CD14-positive monocyte (primary cell): ENCODE measurements at regions of chr6 and their contacts with region 1.

Region 1: DNA sequence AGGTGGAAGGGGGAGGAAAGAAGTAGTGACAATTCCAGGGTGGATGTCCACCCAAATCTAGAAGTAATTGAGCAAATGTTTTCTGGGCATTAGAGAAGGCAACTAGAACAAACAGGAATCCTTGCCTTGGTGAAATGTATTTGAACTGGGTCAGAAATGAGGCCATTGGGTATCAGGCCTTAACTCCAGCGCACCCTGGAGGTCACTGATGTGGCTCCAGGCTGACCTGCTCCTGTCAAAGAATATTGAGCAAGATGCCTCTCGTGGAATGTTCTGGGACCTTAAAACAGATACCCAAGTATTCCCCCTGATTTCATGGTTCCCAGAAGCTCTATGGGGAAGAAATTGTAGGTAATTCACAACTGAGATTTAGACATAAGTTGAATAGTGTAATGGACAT is 6.9 kb downstream of the HLA-DPB1 start:
- DNase-seq: peak; percentile 63 to 79 (median 64)
- H3K4me3 ChIP-seq: no peak overlapping the region
- H3K4me3 Mint-ChIP-seq: no peak overlapping the region
- H3K27ac ChIP-seq: no peak overlapping the region
- H3K27ac Mint-ChIP-seq: peak overlapping the region; percentile 38 to 75 (median 73)
- H3K4me1 ChIP-seq: peaks cover 41 to 44% of the 10 kb centered on the region in 2 donors
- H3K4me1 Mint-ChIP-seq: peaks cover 50% of the 10 kb centered on the region
- H3K27me3 ChIP-seq: no peaks in the 10 kb centered on the region
- H3K27me3 Mint-ChIP-seq: peaks cover 0 to 4% (median 3%) of the 10 kb centered on the region in 3 donors
- CTCF ChIP-seq: peak; percentile 68

Region 2: GRCh38 chr6:32894080-32895005 is 188.4 kb before region 1 on chr6:
- intact Hi-C with region 1: loop called in 1 of 2 experiments (anchors 10 kb)
- DNase-seq: peak; percentile 84 to 90 (median 88)
- H3K4me3 ChIP-seq: peak overlapping the region; percentile 75 to 96 (median 79)
- H3K4me3 Mint-ChIP-seq: peak overlapping the region; percentile 99 to 100
- H3K27ac ChIP-seq: peak overlapping the region; percentile 73 to 82
- H3K27ac Mint-ChIP-seq: peak overlapping the region; percentile 89 to 98 (median 94)
- H3K4me1 ChIP-seq: peaks cover 22 to 42% of the 10 kb centered on the region in 2 donors
- H3K4me1 Mint-ChIP-seq: peaks cover 47% of the 10 kb centered on the region
- H3K27me3 ChIP-seq: no peaks in the 10 kb centered on the region
- H3K27me3 Mint-ChIP-seq: peaks cover 0 to 1% (median 0%) of the 10 kb centered on the region in 3 donors
- CTCF ChIP-seq: no peak

Region 3: GRCh38 chr6:33014841-33015634 is 67.7 kb before region 1 on chr6:
- intact Hi-C with region 1: loop called (anchors 1 to 2 kb)
- DNase-seq: peak; percentile 79 to 82 (median 82)
- H3K4me3 ChIP-seq: no peak overlapping the region
- H3K4me3 Mint-ChIP-seq: peak overlapping the region in 1 of 2 donors; percentile 61
- H3K27ac ChIP-seq: no peak overlapping the region
- H3K27ac Mint-ChIP-seq: peak overlapping the region in 2 of 7 donors; percentile 33 to 35
- H3K4me1 ChIP-seq: peaks cover 36 to 42% of the 10 kb centered on the region in 2 donors
- H3K4me1 Mint-ChIP-seq: peaks cover 41% of the 10 kb centered on the region
- H3K27me3 ChIP-seq: no peaks in the 10 kb centered on the region
- H3K27me3 Mint-ChIP-seq: no peaks in the 10 kb centered on the region
- CTCF ChIP-seq: peak; percentile 85

Region 4: DNA sequence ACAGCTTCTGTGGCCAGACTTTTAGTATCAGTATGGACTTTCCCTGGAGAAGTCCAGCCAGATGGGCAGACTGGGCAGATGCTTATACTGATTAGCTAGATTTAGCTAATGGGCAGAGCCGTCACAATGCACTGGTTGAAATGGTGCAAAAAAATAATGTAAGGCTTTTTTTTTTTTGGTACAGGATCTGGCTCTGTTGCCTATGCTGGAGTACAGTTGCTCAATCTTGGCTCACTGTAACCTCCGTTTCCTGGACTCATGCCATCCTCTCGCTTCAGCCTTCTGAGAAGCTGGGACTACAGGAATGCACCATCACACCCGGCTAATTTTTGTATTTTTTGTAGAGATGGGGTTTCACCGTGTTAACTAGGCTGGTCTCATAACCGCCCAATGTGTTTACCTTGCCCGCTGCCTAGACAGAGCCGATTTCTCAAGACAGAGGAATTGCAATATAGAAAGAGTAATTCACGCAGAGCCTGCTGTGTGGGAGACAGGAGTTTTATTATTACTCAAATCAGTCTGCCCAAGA is 292.5 kb after region 1 on chr6:
- intact Hi-C with region 1: no loop called
- DNase-seq: peak; percentile 38 to 57 (median 55)
- H3K4me3 ChIP-seq: peak overlapping the region in 2 of 3 experiments; percentile 30 to 60
- H3K4me3 Mint-ChIP-seq: peak overlapping the region; percentile 79 to 89
- H3K27ac ChIP-seq: peak overlapping the region; percentile 84 to 86
- H3K27ac Mint-ChIP-seq: peak overlapping the region; percentile 89 to 98 (median 97)
- H3K4me1 ChIP-seq: peaks cover 43 to 54% of the 10 kb centered on the region in 2 donors
- H3K4me1 Mint-ChIP-seq: peaks cover 42% of the 10 kb centered on the region
- H3K27me3 ChIP-seq: no peaks in the 10 kb centered on the region
- H3K27me3 Mint-ChIP-seq: peaks cover 0 to 2% (median 2%) of the 10 kb centered on the region in 3 donors
- CTCF ChIP-seq: no peak

Region 5: DNA sequence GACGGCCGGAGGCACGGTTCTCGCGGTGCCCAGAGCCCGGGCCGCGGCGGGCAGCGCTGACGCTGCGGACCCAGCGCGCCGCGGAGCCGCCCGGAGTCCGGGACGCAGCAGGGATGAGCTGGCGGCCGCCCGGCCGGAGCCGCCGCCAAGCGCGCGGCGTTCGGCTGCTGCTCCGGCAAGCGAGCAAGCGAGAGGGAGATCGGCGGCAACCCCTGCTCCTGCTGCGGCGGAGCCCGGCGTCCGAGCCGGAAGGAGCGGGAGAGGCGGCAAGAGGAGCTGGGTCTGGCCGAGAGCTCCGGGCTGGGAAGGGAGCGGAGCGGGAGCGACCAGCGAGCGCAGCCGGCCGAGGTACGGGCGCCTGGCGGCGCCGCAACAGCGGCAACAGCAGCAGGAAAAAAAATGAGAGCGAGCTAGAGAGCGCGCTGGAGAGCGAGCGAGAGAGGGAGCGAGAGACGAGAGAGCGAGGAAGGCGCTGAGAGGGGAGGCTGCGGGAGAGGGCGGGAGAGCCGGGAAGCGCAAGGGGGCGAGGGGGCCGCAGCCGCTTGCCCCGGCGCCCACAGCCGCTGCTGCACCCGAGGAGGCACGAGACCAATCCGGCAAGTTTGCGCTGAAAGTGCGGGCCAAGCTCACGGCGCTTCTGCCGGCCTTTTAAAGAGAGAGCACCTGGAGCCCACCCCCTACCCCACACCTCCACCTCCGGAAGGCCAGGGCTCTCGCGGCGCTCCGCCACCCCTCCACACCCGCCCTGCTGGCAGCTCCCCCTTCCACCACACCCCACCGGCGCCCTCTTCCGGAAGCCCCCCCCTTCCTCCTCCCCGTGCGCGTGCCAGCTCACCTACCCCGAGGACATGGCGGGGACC is 1062.7 kb after region 1 on chr6:
- intact Hi-C with region 1: no loop called
- DNase-seq: no peak
- H3K4me3 ChIP-seq: no peak overlapping the region
- H3K4me3 Mint-ChIP-seq: peak overlapping the region in 1 of 2 donors; percentile 78
- H3K27ac ChIP-seq: no peak overlapping the region
- H3K27ac Mint-ChIP-seq: no peak overlapping the region
- H3K4me1 ChIP-seq: no peaks in the 10 kb centered on the region
- H3K4me1 Mint-ChIP-seq: peaks cover 2% of the 10 kb centered on the region
- H3K27me3 ChIP-seq: peaks cover 24 to 78% of the 10 kb centered on the region in 2 donors
- H3K27me3 Mint-ChIP-seq: peaks cover 63 to 91% (median 70%) of the 10 kb centered on the region in 3 donors
- CTCF ChIP-seq: no peak